Esophagus muscularis mucosa (tissue), 4 donors: ENCODE measurements at regions of chr9 and their contacts with region 1.

Region 1: GRCh38 chr9:2570615-2571479 is 50.7 kb upstream of the VLDLR start:
- DNase-seq: no peak
- H3K4me3 ChIP-seq: no peak overlapping the region
- H3K27ac ChIP-seq: peak overlapping the region in 1 of 4 donors; percentile 5
- H3K4me1 ChIP-seq: peaks cover 11 to 21% (median 12%) of the 10 kb centered on the region in 4 donors
- H3K27me3 ChIP-seq: no peaks in the 10 kb centered on the region
- CTCF ChIP-seq: no peak
- EP300 ChIP-seq: no peak
- POLR2A ChIP-seq: no peak

Region 2: DNA sequence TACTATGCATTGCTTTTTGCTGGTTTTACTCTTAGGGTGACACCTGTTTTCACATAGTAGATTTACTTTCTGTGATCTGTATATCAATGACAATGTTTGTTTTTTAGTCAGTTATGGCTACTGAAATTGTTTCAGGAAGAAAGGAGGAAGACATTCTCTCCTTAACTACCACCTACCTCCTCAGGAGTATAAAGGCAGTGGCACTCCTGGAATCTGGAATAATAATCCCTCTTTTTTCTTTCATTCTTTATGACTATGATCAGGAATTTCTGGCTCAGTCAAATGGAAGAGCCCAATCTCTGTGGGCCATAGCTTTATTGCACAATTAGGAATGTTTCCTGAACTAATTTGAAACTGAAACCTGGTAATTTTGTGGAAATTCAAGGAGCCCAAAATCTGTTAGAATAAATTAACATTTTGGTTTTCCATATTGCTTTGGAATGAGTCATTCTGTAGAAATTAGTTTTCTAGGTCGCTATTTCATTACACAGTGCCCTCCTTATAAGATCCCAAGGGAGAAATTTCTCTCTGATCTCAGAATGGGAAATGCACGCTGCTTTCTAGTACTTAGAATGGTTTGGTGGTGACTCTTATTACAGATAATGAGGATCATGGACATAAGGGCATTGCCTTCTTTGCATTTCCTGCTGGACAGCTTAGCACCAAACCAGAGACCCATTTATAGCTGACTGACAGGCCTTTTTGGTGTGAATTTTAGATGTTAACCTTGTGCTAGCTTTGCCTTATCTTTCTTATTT is 44.6 kb before region 1 on chr9:
- intact Hi-C with region 1: no loop called
- DNase-seq: no peak
- H3K4me3 ChIP-seq: no peak overlapping the region
- H3K27ac ChIP-seq: no peak overlapping the region
- H3K4me1 ChIP-seq: no peaks in the 10 kb centered on the region
- H3K27me3 ChIP-seq: no peaks in the 10 kb centered on the region
- CTCF ChIP-seq: no peak
- EP300 ChIP-seq: no peak
- POLR2A ChIP-seq: no peak

Region 3: DNA sequence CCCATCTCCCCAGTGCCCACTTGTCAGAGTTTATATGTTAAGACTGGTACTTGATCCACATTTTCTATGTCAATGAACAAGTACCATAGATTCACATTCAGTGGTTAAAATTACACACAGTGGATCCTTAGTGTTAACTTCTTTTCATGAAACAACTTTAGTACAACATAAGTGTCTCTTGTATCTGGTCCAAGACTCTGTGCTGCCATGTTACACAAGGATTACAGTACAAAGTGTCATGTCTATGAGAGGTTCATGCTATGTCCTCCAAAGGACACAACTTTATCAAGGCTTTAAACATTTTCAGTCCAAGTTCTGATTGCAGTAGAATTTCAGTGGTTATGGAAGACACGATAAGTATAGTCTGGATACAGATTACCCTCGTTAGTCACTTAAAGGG is 37.4 kb after region 1 on chr9:
- intact Hi-C with region 1: loop called (anchors 5 kb)
- DNase-seq: no peak
- H3K4me3 ChIP-seq: no peak overlapping the region
- H3K27ac ChIP-seq: no peak overlapping the region
- H3K4me1 ChIP-seq: peaks cover 4 to 9% (median 8%) of the 10 kb centered on the region in 4 donors
- H3K27me3 ChIP-seq: no peaks in the 10 kb centered on the region
- CTCF ChIP-seq: no peak
- EP300 ChIP-seq: no peak
- POLR2A ChIP-seq: no peak